K562 (cell line): ENCODE measurements at regions of chr1 and their contacts with region 1.

Region 1: GRCh38 chr1:179058487-179059483 is 23.1 kb upstream of the TOR3A start:
- DNase-seq: no peak
- ATAC-seq: peak; percentile 59
- H3K4me3 ChIP-seq: no peak overlapping the region
- H3K27ac ChIP-seq: peak overlapping the region; percentile 18
- H3K4me1 ChIP-seq: peaks cover 13 to 43% of the 10 kb centered on the region in 2 experiments
- H3K27me3 ChIP-seq: no peaks in the 10 kb centered on the region
- CTCF ChIP-seq: no peak
- EP300 ChIP-seq: peak; percentile 14; the same call in 1 of the 2 replicates
- POLR2A ChIP-seq: no peak
- RAD21 ChIP-seq: no peak

Region 2: DNA sequence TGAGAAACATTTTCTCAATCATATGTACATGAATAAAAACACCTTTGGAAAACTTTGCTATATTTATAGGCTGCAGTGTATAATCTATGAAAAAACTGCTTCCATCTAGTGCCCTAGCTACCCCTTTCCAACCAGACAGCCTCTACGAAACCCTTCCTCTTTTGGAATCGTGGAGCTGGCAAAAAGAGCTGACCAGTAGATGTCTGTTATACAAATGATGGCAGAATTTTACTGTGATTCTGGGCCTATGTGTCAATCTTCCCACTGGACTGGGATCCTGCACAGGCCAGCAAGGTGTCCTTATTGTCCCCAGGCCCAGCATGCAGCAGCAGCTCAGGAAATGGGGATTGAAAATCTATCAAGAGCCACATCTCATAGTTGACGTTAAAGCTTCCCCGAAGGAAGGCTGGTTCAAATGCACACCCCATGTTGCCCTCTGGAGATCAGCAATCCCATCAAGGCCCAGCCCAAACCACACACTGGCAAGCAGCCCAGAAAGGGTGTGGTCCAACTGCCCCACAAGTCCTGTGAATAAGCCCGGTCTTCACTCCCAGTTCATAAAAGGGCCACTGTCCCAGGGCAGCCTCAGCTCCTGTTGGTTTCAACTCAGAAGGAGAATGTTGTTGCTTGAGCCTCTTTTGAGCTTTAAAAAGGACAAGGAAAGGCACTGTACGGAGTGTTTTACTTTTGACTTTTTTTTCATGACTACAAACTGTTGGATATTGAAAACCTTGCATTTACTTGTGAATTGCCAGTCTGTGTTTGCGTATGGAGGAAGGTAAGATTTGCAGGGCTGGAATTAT is 41.8 kb before region 1 on chr1:
- CTCF ChIA-PET with region 1: no interaction called
- POLR2A ChIA-PET with region 1: interaction called, 4 read pairs
- in situ Hi-C with region 1: no loop called
- intact Hi-C with region 1: loop called (anchors 2 kb)
- DNase-seq: peak; percentile 87 to 99 (median 91)
- ATAC-seq: peak; percentile 91
- H3K4me3 ChIP-seq: peak overlapping the region; percentile 21
- H3K27ac ChIP-seq: peak overlapping the region; percentile 67
- H3K4me1 ChIP-seq: peaks cover 39 to 43% of the 10 kb centered on the region in 2 experiments
- H3K27me3 ChIP-seq: no peaks in the 10 kb centered on the region
- CTCF ChIP-seq: no peak; a peak in 1 of 6 replicates
- EP300 ChIP-seq: peak; percentile 91
- POLR2A ChIP-seq: peak; percentile 71
- RAD21 ChIP-seq: peak in 1 of 2 experiments; percentile 10; a peak in 1 of 4 replicates

Region 3: DNA sequence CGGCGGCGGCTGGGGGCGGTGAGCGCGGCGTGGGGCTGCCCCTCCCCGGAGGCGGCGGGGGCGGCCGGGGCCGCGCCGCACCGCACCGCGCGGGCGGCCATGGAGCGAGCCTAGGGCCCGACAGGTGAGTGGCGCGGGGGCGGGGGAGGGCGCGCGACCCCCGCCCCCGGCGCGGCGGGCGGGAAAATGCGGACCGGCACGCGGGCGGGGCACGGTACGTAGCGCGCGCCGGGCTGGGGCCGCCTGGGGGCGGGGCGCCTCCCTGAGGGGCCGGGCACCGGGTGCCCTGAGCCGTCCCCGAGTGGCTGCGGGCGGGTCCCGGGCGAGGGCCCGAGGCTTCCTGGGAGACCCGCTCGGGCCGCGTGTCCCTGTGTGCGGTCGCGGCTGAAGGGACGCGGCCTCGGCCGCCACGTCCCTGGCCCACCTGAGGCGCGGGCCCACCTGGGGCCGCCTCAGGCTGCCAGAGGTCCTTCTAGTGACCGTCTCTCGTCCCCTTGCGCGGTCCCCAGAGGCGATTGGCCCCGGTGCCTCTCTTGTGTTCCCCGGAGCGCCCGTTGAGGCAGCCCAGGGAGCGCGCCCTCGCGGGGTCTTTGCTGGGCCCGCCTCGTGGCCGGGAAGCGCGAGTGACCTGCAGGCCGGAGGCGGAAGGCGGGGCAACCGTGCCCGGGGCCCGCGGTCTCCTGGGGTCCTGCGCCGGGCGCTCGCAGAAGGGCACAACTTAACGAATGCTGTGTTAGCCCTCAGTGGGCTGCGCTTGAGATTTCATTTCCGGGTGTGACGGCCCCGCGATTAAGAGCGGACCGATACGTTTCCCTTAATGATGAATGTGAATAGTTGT is 32.6 kb before region 1 on chr1:
- CTCF ChIA-PET with region 1: no interaction called
- POLR2A ChIA-PET with region 1: interaction called, 3 read pairs
- in situ Hi-C with region 1: no loop called
- intact Hi-C with region 1: loop called (anchors 2 kb)
- DNase-seq: peak; percentile 85 to 96 (median 94)
- ATAC-seq: peak; percentile 81
- H3K4me3 ChIP-seq: peak overlapping the region; percentile 72
- H3K27ac ChIP-seq: peak overlapping the region; percentile 95
- H3K4me1 ChIP-seq: peaks cover 28 to 61% of the 10 kb centered on the region in 2 experiments
- H3K27me3 ChIP-seq: no peaks in the 10 kb centered on the region
- CTCF ChIP-seq: no peak
- EP300 ChIP-seq: no peak
- POLR2A ChIP-seq: peak; percentile 75
- RAD21 ChIP-seq: no peak; a peak in 1 of 4 replicates